Posterior cingulate gyrus (tissue), 11 donors: ENCODE measurements at regions of chr3 and their contacts with region 1.

Region 1: GRCh38 chr3:197151569-197151968 is 122.0 kb upstream of the MELTF start:
- DNase-seq: no peak

Region 2: GRCh38 chr3:197168606-197169005 is 17.0 kb after region 1 on chr3:
- intact Hi-C with region 1: loop called (anchors 1 kb)
- DNase-seq: no peak